AG04449 (cell line): ENCODE measurements at regions of chr17 and their contacts with region 1.

Region 1: GRCh38 chr17:68759343-68760132 is 158.4 kb upstream of the FAM20A start:
- DNase-seq: peak; percentile 65
- H3K4me3 ChIP-seq: peak overlapping the region; percentile 43
- CTCF ChIP-seq: peak; percentile 91

Region 2: GRCh38 chr17:68457539-68458259 is 301.8 kb before region 1 on chr17:
- CTCF ChIA-PET with region 1: interaction called, 75 read pairs
- POLR2A ChIA-PET with region 1: no interaction called
- DNase-seq: peak; percentile 85
- H3K4me3 ChIP-seq: peak overlapping the region; percentile 94
- CTCF ChIP-seq: no peak

Region 3: GRCh38 chr17:68468334-68468733 is 291.2 kb before region 1 on chr17:
- CTCF ChIA-PET with region 1: interaction called, 75 read pairs
- POLR2A ChIA-PET with region 1: no interaction called
- DNase-seq: no peak
- H3K4me3 ChIP-seq: no peak overlapping the region
- CTCF ChIP-seq: no peak

Region 4: DNA sequence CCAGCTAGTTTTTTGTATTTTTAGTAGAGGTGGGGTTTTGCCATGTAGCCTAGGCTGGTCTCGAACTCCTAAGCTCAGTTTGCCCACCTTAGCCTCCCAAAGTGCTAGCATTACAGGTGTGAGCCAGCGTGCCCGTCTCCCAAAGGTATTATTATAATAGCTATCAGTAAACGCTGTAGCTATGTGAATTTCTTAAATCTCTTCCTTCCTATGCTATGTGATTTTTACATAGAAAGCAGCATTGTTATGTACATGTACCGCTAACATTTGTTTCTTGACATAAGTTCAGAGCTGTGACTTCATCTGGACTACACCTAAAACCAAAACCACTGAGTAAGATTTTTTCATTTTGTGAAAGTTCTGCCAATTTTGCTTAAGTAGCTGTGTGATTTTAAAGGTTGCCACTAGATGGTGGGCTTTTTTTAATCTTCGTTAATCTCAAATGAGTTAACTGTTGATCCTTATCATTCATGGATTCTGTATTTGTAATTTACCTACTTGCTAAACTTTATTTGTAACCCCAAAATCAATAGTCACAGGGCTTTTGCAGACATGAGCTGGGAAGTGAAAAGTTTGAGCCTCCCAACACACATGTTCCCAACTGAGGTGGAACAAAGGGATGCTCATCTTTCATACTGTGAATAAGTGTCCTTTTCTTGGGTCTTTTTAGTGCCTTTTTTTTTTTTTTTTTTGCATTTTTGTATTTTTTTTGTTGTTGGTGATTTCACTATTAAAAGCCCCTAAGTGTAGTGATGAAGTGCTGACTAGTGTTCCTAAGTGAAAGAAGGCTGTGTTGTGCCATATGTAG is 225.4 kb before region 1 on chr17:
- CTCF ChIA-PET with region 1: interaction called, 71 read pairs
- POLR2A ChIA-PET with region 1: no interaction called
- DNase-seq: no peak
- H3K4me3 ChIP-seq: no peak overlapping the region
- CTCF ChIP-seq: peak; percentile 9

Region 5: DNA sequence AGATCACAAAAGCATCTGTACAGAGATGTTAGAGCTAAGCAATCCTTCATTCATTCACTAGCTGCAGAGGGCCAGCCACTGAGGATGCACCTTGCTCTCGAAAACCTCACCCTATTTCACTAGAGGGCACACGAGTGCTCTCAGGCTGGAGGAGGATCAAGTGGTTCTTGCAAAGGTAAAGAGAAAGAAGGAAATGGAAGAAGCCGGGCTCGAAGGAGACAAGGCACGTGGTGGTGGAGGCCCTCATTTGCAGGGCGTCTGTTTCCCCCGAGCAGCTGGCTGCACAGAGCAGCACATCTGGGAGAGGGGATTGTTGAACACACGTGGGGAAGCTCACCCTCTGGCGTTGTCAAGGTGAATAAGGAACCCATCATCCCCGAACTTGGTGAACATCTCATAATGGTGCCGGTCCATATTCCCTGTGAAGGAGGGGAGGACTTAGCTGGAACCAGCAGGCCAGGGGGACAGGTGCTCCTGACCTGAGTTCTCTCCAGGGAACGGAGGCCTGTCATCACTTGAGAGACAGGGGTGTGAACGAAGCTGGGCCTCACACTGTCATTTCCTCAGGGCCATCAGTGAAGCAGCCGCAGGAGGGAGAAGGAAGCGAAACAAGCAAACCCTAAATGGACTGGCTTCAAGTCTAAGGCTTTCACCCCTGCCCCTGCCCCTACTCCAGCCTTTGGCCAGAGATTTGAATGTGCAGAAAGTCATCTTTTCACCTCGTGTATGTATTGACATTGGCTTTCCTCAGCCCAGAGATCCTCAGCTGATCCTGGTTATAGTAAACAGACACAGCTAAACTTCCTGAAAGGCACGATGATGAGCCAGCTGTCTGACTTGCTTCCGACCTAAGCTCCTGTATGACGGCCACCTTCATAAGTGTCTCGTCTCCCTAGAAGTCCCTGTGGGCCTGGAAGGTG is 219.7 kb before region 1 on chr17:
- CTCF ChIA-PET with region 1: interaction called, 52 read pairs
- POLR2A ChIA-PET with region 1: no interaction called
- DNase-seq: no peak
- H3K4me3 ChIP-seq: no peak overlapping the region
- CTCF ChIP-seq: peak; percentile 20

Region 6: GRCh38 chr17:68771867-68772515 is 12.5 kb after region 1 on chr17:
- CTCF ChIA-PET with region 1: interaction called, 12 read pairs
- POLR2A ChIA-PET with region 1: no interaction called
- DNase-seq: no peak
- H3K4me3 ChIP-seq: no peak overlapping the region
- CTCF ChIP-seq: peak; percentile 53